AG04449 (cell line): ENCODE measurements at regions of chr17 and their contacts with region 1.

Region 1: GRCh38 chr17:50707289-50708049 is at the start of gene ANKRD40:
- DNase-seq: peak; percentile 70
- H3K4me3 ChIP-seq: peak within 1 kb of the TSS; percentile 88
- CTCF ChIP-seq: no peak

Region 2: DNA sequence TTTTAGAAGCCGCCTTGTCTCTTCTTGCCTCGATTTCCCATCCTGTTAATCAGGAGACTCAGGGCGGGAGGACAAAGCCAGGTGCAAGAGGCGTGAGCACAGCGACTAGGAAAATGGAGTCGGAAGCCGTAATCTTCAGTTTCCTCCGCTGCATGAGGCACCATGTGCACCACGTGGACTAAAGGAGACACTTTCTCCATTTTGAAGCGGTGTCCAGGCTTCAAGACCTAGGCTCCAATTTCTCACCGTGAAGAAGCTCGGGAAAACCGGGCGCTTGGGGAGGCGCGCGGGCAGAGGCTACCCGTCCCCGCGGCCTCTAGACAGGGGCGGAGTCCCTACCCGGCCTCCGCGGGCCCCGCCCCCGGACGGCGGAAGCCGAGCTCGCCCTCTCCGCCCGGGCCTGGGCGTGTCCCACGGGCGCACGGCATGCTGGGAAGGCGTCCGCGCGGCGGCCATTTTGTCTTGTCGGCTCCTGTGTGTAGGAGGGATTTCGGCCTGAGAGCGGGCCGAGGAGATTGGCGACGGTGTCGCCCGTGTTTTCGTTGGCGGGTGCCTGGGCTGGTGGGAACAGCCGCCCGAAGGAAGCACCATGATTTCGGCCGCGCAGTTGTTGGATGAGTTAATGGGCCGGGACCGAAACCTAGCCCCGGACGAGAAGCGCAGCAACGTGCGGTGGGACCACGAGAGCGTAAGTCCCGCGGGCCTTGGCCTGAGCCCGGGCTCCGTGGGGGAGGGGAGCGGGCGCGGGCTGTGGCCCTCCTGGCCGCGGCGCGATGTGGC is 11.9 kb after region 1 on chr17 and contains the start of gene LUC7L3:
- CTCF ChIA-PET with region 1: interaction called, 3 read pairs
- POLR2A ChIA-PET with region 1: interaction called, 13 read pairs
- DNase-seq: peak; percentile 52
- H3K4me3 ChIP-seq: peak within 1 kb of the TSS; percentile 93
- CTCF ChIP-seq: no peak

Region 3: GRCh38 chr17:50863221-50863843 is 155.9 kb after region 1 on chr17:
- CTCF ChIA-PET with region 1: no interaction called
- POLR2A ChIA-PET with region 1: no interaction called
- DNase-seq: no peak
- H3K4me3 ChIP-seq: no peak overlapping the region
- CTCF ChIP-seq: peak; percentile 30